Right ventricle myocardium inferior (tissue), 1 donor: ENCODE measurements at regions of chr12 and their contacts with region 1.

Region 1: GRCh38 chr12:126874427-126875026 is 1392.4 kb upstream of the TMEM132C start:
- DNase-seq: peak; percentile 74
- ATAC-seq: no peak

Region 2: DNA sequence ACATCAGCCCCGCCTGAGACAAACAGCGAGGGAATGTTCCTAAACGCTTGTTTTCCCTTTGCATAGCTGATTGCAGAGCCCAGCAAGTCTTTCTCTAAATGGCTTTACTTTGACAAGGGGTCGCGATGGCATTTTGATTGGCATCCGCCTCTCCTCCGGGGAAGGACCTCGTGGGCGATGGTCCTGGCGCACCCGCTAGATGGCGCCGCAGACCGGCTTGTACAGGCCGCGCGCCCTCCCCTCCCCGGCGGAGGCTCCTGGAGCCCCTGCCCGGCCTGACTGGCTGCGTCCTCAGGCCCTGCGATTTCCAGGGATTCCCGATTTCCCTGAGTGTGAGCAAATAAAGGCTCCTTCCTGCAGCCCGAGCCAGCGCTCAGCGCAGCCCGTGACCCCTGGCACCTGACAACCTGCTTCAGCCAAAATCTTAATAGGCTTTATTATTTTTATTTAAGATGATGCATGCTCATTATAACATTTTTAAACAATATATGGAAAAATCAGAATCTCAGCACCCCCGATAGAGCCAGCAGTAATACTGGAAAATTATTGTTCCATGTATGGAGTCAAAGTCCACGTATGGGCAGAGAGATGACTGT is 1341.0 kb before region 1 on chr12:
- intact Hi-C with region 1: loop called (anchors 2 kb)
- DNase-seq: peak; percentile 74
- ATAC-seq: peak; percentile 50

Region 3: GRCh38 chr12:127445581-127446139 is 571.1 kb after region 1 on chr12:
- intact Hi-C with region 1: no loop called
- DNase-seq: no peak
- ATAC-seq: no peak